AG04450 (cell line): ENCODE measurements at regions of chr11 and their contacts with region 1.

Region 1: GRCh38 chr11:117226388-117227385 is 5.2 kb downstream of the PCSK7 start:
- DNase-seq: no peak
- H3K4me3 ChIP-seq: no peak overlapping the region
- H3K27ac ChIP-seq: peak overlapping the region; percentile 11
- H3K27me3 ChIP-seq: no peaks in the 10 kb centered on the region
- CTCF ChIP-seq: peak; percentile 79

Region 2: DNA sequence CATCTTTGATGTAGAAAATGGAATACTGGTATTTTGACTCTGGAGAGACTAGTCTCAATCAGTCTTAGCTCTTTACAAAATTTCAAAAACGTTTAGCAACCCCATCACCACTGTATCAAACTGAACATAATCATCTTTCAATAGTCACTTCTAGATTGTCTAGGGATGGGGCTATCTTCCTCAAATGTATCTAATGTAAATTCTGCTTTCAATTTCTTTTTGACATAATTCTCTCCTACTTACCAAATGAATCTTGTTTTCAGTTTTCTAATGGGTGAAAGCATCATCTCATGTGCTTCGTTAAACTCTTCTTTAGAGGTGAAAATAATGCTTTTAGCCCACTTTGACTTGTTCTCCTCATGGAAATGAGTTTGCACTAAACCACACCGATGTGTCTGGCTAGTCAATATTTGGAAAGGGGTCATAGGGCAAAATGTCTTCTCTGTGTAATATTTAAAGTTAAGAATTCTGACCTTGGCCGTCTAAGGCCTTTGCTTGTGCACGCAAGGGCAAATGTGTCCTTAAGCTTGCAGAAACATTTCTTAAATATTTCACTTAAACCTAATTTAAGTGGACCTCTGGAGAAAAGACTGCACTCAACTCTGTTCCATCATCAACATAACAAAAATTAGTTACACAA is 133.6 kb before region 1 on chr11:
- CTCF ChIA-PET with region 1: no interaction called
- POLR2A ChIA-PET with region 1: no interaction called
- DNase-seq: no peak
- H3K4me3 ChIP-seq: no peak overlapping the region
- H3K27ac ChIP-seq: no peak overlapping the region
- H3K27me3 ChIP-seq: no peaks in the 10 kb centered on the region
- CTCF ChIP-seq: no peak

Region 3: GRCh38 chr11:117199061-117199915 is 27.4 kb before region 1 on chr11 and contains the start of gene TAGLN:
- CTCF ChIA-PET with region 1: interaction called, 11 read pairs
- POLR2A ChIA-PET with region 1: interaction called, 6 read pairs
- DNase-seq: peak; percentile 91
- H3K4me3 ChIP-seq: peak within 1 kb of the TSS; percentile 88
- H3K27ac ChIP-seq: peak within 1 kb of the TSS; percentile 96
- H3K27me3 ChIP-seq: no peaks in the 10 kb centered on the region
- CTCF ChIP-seq: no peak
- polyA plus RNA-seq, gene TAGLN: 3,100 and 3,444 TPM in 2 replicates

Region 4: GRCh38 chr11:117210620-117211019 is 16.1 kb before region 1 on chr11:
- CTCF ChIA-PET with region 1: interaction called, 14 read pairs
- POLR2A ChIA-PET with region 1: interaction called, 22 read pairs
- DNase-seq: no peak
- H3K4me3 ChIP-seq: no peak overlapping the region
- H3K27ac ChIP-seq: no peak overlapping the region
- H3K27me3 ChIP-seq: no peaks in the 10 kb centered on the region
- CTCF ChIP-seq: no peak